ENCODE measurements at regions of chr11 and their contacts with region 1.

Region 1: GRCh38 chr11:17145972-17146371 is 61.8 kb downstream of the PIK3C2A start:
- DNase-seq: no peak
- H3K4me3 ChIP-seq: no peak overlapping the region
- H3K27ac ChIP-seq: no peak overlapping the region
- H3K4me1 ChIP-seq: peaks cover 44% of the 10 kb centered on the region
- H3K27me3 ChIP-seq: no peaks in the 10 kb centered on the region
- CTCF ChIP-seq: no peak

Region 2: DNA sequence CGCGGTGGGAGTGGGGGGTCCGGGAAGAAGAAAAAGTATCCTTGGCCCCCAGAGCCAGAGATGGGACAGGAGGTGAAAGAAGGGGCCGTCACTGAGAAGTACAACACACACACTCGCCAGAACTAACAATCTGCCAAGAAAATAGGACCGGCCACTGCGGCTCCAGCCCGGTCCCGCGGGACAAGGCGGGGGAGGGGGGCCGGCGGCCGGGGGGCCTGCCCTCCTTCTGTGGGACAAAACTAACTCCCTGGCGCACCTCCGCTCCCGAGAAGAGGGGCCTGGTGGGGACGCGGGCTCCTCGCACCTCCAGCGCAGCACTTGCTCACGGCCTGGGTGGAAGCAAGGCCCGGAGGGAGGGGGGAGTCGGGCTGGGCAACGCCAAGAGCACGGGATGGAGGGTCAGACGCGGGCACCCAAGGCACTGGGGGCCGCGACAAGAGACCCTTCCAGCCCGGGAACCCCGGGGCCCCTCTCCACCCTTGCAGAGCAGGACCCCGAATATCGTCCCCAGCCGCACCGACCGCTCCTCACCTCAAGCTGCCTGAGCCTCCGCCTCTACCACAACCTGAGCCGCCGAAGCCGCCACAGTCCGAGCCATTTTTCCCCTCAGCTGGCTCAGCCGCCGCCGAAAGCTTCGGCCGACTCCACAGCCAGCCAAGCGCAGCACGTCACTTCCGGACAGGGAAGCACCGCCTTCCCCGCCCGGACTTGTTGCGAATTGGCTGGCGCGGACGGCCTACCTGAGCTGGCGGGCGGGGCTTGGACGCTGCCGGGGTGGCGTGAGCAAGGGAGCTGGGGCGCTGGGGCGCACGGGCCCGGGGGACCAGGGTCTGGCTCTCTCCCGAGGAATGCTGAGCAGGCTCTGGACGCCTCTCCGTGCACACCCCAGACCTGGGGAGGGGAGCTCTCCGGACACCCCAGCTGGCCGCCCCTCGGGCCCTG is 61.6 kb after region 1 on chr11 and contains the start of gene PIK3C2A:
- intact Hi-C with region 1: loop called (anchors 10 kb)
- DNase-seq: peak; percentile 98
- H3K4me3 ChIP-seq: peak within 1 kb of the TSS; percentile 83
- H3K27ac ChIP-seq: peak within 1 kb of the TSS; percentile 96
- H3K4me1 ChIP-seq: peaks cover 62% of the 10 kb centered on the region
- H3K27me3 ChIP-seq: no peaks in the 10 kb centered on the region
- CTCF ChIP-seq: no peak
- total RNA-seq, gene PIK3C2A: 30.6 TPM

Region 3: GRCh38 chr11:17528181-17528691 is 382.3 kb after region 1 on chr11:
- intact Hi-C with region 1: no loop called
- DNase-seq: peak; percentile 40
- H3K4me3 ChIP-seq: no peak overlapping the region
- H3K27ac ChIP-seq: no peak overlapping the region
- H3K4me1 ChIP-seq: peaks cover 14% of the 10 kb centered on the region
- H3K27me3 ChIP-seq: peaks cover 9% of the 10 kb centered on the region
- CTCF ChIP-seq: peak; percentile 80

Region 4: GRCh38 chr11:17645190-17645970 is 499.4 kb after region 1 on chr11:
- intact Hi-C with region 1: no loop called
- DNase-seq: no peak
- H3K4me3 ChIP-seq: no peak overlapping the region
- H3K27ac ChIP-seq: no peak overlapping the region
- H3K4me1 ChIP-seq: no peaks in the 10 kb centered on the region
- H3K27me3 ChIP-seq: peaks cover 51% of the 10 kb centered on the region
- CTCF ChIP-seq: no peak